CD4-positive, alpha-beta T cell (primary cell): ENCODE measurements at regions of chr3 and their contacts with region 1.

Region 1: DNA sequence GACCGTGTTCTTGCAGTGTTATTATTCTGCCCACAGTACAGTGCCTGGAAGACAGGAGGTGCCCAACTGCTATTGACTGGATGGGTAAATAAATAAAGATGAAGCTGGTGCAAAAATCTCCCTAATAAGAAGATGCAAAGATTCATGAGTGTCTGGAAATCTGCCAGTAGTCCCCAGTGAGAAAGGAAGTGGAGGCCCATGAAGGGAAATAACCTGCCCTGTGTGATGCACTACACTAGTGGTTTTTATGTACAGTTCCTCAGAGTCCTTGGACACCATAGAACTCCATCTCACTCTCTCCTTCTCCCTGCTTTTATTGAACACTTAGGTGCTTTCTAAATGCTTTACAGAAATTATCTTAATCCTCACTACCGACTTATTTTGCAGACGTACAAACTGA is 8.3 kb upstream of the SUCLG2 start:
- DNase-seq: peak in 4 of 14 experiments; percentile 47 to 80 (median 72)
- ATAC-seq: peak; percentile 91
- H3K4me3 ChIP-seq: no peak overlapping the region
- H3K4me3 Mint-ChIP-seq: peak overlapping the region; percentile 9
- H3K27ac ChIP-seq: no peak overlapping the region
- H3K27ac Mint-ChIP-seq: peak overlapping the region; percentile 48
- H3K4me1 ChIP-seq: peaks cover 18% of the 10 kb centered on the region
- H3K4me1 Mint-ChIP-seq: peaks cover 82% of the 10 kb centered on the region
- H3K27me3 ChIP-seq: no peaks in the 10 kb centered on the region
- H3K27me3 Mint-ChIP-seq: no peaks in the 10 kb centered on the region
- CTCF ChIP-seq: no peak

Region 2: DNA sequence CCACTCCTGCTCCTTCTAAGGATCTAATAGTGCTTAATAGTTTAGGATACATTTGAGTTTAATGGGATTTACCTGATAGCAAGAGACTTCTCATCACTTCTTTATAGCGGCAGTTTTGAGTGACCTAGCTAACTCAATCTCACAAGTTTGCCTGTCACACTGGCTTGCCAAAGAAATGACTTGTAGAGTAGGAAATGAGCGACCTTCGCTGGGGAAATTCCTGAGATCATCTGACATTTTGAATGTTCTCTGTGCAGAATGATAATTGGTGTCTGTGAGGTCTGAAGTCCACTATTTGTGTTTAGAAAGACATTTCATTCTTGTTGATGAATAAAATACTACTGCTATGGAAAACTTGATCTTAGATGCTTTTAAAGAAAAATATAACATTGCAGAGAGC is 38.7 kb before region 1 on chr3:
- CTCF ChIA-PET with region 1: no interaction called
- POLR2A ChIA-PET with region 1: no interaction called
- intact Hi-C with region 1: no loop called
- DNase-seq: no peak
- ATAC-seq: no peak
- H3K4me3 ChIP-seq: no peak overlapping the region
- H3K4me3 Mint-ChIP-seq: no peak overlapping the region
- H3K27ac ChIP-seq: no peak overlapping the region
- H3K27ac Mint-ChIP-seq: no peak overlapping the region
- H3K4me1 ChIP-seq: peaks cover 5% of the 10 kb centered on the region
- H3K4me1 Mint-ChIP-seq: peaks cover 46% of the 10 kb centered on the region
- H3K27me3 ChIP-seq: no peaks in the 10 kb centered on the region
- H3K27me3 Mint-ChIP-seq: no peaks in the 10 kb centered on the region
- CTCF ChIP-seq: no peak

Region 3: GRCh38 chr3:67674055-67674454 is 11.3 kb after region 1 on chr3:
- CTCF ChIA-PET with region 1: no interaction called
- POLR2A ChIA-PET with region 1: no interaction called
- intact Hi-C with region 1: no loop called
- DNase-seq: peak in 1 of 14 experiments; percentile 36
- ATAC-seq: no peak
- H3K4me3 ChIP-seq: no peak overlapping the region
- H3K4me3 Mint-ChIP-seq: no peak overlapping the region
- H3K27ac ChIP-seq: no peak overlapping the region
- H3K27ac Mint-ChIP-seq: no peak overlapping the region
- H3K4me1 ChIP-seq: peaks cover 12% of the 10 kb centered on the region
- H3K4me1 Mint-ChIP-seq: peaks cover 25% of the 10 kb centered on the region
- H3K27me3 ChIP-seq: no peaks in the 10 kb centered on the region
- H3K27me3 Mint-ChIP-seq: no peaks in the 10 kb centered on the region
- CTCF ChIP-seq: no peak

Region 4: GRCh38 chr3:67739851-67740250 is 77.1 kb after region 1 on chr3:
- CTCF ChIA-PET with region 1: no interaction called
- POLR2A ChIA-PET with region 1: interaction called, 5 read pairs
- intact Hi-C with region 1: loop called (anchors 5 kb)
- DNase-seq: no peak
- ATAC-seq: no peak
- H3K4me3 ChIP-seq: no peak overlapping the region
- H3K4me3 Mint-ChIP-seq: no peak overlapping the region
- H3K27ac ChIP-seq: peak overlapping the region in 1 of 2 donors; percentile 20
- H3K27ac Mint-ChIP-seq: peak overlapping the region; percentile 89
- H3K4me1 ChIP-seq: peaks cover 29% of the 10 kb centered on the region
- H3K4me1 Mint-ChIP-seq: peaks cover 86% of the 10 kb centered on the region
- H3K27me3 ChIP-seq: no peaks in the 10 kb centered on the region
- H3K27me3 Mint-ChIP-seq: no peaks in the 10 kb centered on the region
- CTCF ChIP-seq: no peak